Activated B cell treated with CpG ODN at 0.5 μM for 24 hours (primary cell): ENCODE measurements at regions of chr9 and their contacts with region 1.

Region 1: DNA sequence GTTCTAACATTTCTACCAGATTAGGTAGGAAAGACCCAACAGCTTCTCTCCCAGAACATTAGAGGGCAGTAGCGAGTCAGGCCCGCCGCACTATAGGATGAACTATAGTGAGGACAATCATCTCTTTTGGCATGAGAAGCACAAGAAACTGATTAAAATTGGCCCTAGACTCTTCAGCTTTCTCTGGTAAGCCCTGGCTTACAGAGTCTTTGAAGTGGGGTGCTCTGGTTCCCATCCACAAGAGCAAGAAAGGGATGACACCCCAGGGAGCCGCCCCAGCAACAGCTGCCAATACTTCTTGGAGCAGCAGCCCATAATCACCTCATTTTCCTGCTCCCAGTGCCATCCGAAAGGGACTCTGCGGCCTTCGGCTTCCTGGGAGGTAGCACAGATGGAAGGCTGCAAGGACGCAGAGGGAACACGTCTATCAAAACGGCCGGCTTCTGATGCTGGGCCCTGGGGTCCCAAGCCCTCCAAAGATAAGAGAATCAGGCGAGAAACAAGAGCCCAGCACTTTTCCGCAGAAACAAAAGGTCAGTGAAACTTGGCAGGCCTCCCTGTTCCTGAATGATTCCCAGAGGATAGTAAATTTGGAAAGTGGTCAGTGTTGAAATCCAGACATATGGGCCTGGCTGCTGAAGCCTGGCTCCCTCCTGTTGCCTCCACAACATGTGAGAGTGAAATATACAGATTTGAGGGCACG is 69.3 kb downstream of the HSD17B3 start:
- DNase-seq: no peak
- ATAC-seq: peak; percentile 57
- H3K4me3 Mint-ChIP-seq: no peak overlapping the region
- H3K27ac Mint-ChIP-seq: no peak overlapping the region
- H3K4me1 Mint-ChIP-seq: no peaks in the 10 kb centered on the region
- H3K27me3 Mint-ChIP-seq: peaks cover 21% of the 10 kb centered on the region
- CTCF ChIP-seq: no peak

Region 2: GRCh38 chr9:96317335-96317980 is 84.8 kb after region 1 on chr9:
- CTCF ChIA-PET with region 1: interaction called, 5 read pairs
- POLR2A ChIA-PET with region 1: no interaction called
- intact Hi-C with region 1: loop called (anchors 2 kb)
- DNase-seq: peak; percentile 25
- ATAC-seq: no peak
- H3K4me3 Mint-ChIP-seq: no peak overlapping the region
- H3K27ac Mint-ChIP-seq: no peak overlapping the region
- H3K4me1 Mint-ChIP-seq: no peaks in the 10 kb centered on the region
- H3K27me3 Mint-ChIP-seq: peaks cover 4% of the 10 kb centered on the region
- CTCF ChIP-seq: peak; percentile 98

Region 3: GRCh38 chr9:96667361-96667728 is 434.7 kb after region 1 on chr9:
- CTCF ChIA-PET with region 1: interaction called, 3 read pairs
- POLR2A ChIA-PET with region 1: no interaction called
- intact Hi-C with region 1: loop called (anchors 2 kb)
- DNase-seq: no peak
- ATAC-seq: no peak
- H3K4me3 Mint-ChIP-seq: no peak overlapping the region
- H3K27ac Mint-ChIP-seq: no peak overlapping the region
- H3K4me1 Mint-ChIP-seq: no peaks in the 10 kb centered on the region
- H3K27me3 Mint-ChIP-seq: peaks cover 15% of the 10 kb centered on the region
- CTCF ChIP-seq: no peak